Activated CD4-positive, alpha-beta memory T cell treated with anti-CD3 and anti-CD28 coated beads, Interleukin-2, amount 10 ng/mL, durations not matched to agents 7 days and 5 days (primary cell): ENCODE measurements at regions of chr11 and their contacts with region 1.

Region 1: DNA sequence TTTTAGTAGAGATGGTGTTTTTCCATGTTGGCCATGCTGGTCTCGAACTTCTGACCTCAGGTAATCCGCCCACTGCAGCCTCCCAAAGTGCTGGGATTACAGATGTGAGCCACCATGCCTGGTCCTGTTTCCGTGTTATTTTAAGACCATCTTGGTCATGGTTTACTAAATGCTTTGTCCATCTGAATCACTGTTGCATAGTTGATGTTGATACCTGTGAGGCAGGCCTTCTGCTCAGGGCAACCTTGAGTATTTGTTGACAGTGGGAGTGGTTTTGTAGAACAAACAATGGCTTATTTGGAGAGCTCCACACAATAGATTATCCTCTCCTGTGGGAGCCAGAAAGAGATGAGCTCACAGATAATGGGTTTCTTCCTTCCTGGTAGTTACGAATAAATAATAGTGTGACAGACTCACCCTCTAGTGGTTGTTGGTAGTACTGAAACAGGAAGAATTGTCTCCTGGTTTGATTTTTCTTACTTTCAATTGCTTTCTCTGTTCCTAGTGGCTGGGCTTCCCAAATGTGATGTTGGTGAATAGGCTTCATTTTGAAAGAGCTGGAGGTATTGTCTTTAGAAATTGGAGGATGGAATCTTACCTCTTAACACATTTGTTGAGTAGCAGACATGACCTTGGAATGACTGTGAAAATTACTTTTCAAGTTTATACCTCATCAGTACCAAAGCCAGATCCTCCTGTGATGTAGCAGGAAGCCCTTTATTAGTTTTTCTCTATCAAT is 39.0 kb downstream of the CTNND1 start:
- DNase-seq: no peak
- H3K4me3 Mint-ChIP-seq: no peak overlapping the region
- H3K27ac Mint-ChIP-seq: peak overlapping the region; percentile 49
- H3K4me1 Mint-ChIP-seq: peaks cover 30% of the 10 kb centered on the region
- H3K27me3 Mint-ChIP-seq: no peaks in the 10 kb centered on the region

Region 2: GRCh38 chr11:57604296-57605027 is 196.2 kb before region 1 on chr11:
- CTCF ChIA-PET with region 1: no interaction called
- POLR2A ChIA-PET with region 1: no interaction called
- DNase-seq: no peak
- H3K4me3 Mint-ChIP-seq: no peak overlapping the region
- H3K27ac Mint-ChIP-seq: no peak overlapping the region
- H3K4me1 Mint-ChIP-seq: peaks cover 3% of the 10 kb centered on the region
- H3K27me3 Mint-ChIP-seq: peaks cover 21% of the 10 kb centered on the region

Region 3: GRCh38 chr11:57644748-57645688 is 155.6 kb before region 1 on chr11:
- CTCF ChIA-PET with region 1: interaction called, 15 read pairs
- POLR2A ChIA-PET with region 1: no interaction called
- DNase-seq: peak; percentile 85
- H3K4me3 Mint-ChIP-seq: no peak overlapping the region
- H3K27ac Mint-ChIP-seq: no peak overlapping the region
- H3K4me1 Mint-ChIP-seq: peaks cover 31% of the 10 kb centered on the region
- H3K27me3 Mint-ChIP-seq: peaks cover 64% of the 10 kb centered on the region

Region 4: DNA sequence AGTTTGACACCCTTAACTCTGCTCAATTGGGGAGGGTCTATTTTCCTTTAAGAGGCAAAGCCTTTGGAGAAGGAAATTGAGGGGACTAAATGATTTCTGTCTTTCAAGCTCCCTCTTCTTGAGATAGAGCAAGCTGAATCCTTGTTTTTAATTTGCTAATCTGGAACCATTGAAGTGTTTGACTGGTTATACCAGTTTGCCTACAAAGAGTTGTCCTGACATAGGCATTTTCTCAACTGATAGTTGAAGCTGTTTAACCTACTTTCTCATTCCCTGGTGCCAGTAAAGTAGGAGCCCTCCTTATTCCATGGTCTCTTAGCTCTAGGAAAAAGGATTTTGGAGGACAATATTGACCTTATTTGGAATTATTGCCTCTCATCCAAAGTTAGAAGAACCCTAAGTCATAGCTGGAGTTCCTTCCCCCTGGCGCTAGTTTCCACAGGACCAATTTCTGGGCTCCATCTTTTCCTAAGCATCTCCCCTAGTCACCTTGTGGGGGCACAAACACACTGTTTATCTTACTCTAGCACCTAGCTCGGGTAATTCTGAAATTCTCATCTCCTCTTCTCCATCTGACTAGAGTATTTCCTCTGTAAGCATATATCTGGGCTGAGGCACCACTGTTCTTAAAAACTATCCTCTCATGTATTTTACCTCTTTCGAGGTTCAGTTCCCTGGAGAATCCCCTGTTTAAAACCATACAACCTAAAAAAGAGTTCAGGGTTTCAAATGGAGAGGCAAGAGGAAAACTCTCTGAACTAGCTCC is 125.3 kb before region 1 on chr11:
- CTCF ChIA-PET with region 1: interaction called, 13 read pairs
- POLR2A ChIA-PET with region 1: interaction called, 3 read pairs
- DNase-seq: no peak
- H3K4me3 Mint-ChIP-seq: no peak overlapping the region
- H3K27ac Mint-ChIP-seq: no peak overlapping the region
- H3K4me1 Mint-ChIP-seq: peaks cover 70% of the 10 kb centered on the region
- H3K27me3 Mint-ChIP-seq: no peaks in the 10 kb centered on the region

Region 5: DNA sequence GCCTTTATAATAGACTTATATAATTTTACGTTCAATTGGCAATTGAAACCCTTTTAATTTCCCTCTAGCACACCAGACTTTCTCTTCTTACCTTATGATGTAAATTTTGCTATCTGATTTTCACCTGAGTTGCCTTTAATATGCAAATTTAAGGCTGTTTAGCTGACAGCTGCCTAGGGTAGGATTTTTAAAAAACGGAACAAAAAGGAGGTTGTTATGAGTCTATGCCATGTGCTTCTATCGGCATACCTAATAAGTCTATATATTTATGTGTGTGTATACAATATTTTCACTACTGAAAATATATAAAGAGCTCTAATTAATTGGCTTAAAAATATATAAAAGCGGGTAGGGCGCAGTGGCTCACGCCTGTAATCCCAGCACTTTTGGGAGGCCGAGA is 71.1 kb before region 1 on chr11:
- CTCF ChIA-PET with region 1: interaction called, 14 read pairs
- POLR2A ChIA-PET with region 1: interaction called, 4 read pairs
- DNase-seq: no peak
- H3K4me3 Mint-ChIP-seq: no peak overlapping the region
- H3K27ac Mint-ChIP-seq: no peak overlapping the region
- H3K4me1 Mint-ChIP-seq: peaks cover 10% of the 10 kb centered on the region
- H3K27me3 Mint-ChIP-seq: no peaks in the 10 kb centered on the region

Region 6: DNA sequence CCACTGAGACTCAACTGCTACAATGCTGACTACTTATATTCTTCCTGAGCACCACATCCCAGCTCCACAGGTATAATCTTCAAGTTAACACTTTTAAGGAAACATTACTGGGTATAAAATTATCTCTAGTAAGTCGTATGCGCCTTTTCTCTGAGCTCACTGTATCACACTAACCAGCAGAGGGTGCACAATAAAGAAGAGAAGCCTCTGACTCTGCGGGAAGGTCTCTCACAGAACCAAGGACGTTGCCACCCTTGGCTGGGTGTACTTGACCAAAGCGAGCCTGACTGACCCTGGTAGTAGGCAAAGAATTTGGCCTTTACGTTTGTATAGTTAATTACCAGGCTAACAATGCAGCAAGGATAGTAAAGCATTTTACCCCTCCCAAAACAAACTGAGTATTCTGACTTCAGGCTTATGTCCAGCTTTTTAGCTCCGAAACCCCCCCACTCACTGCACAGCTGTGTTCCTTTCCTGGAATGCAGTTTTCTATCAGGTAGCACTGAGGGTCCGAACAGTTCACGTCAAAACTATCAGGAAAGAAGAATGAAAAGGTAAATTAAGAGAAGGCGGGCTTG is 48.8 kb before region 1 on chr11 and contains the start of gene BTBD18:
- CTCF ChIA-PET with region 1: interaction called, 60 read pairs
- POLR2A ChIA-PET with region 1: interaction called, 4 read pairs
- DNase-seq: no peak
- H3K4me3 Mint-ChIP-seq: no peak within 1 kb of the TSS
- H3K27ac Mint-ChIP-seq: no peak within 1 kb of the TSS
- H3K4me1 Mint-ChIP-seq: peaks cover 4% of the 10 kb centered on the region
- H3K27me3 Mint-ChIP-seq: no peaks in the 10 kb centered on the region
- total RNA-seq, gene BTBD18: not detected

Region 7: GRCh38 chr11:57779275-57779674 is 21.3 kb before region 1 on chr11:
- CTCF ChIA-PET with region 1: interaction called, 18 read pairs
- POLR2A ChIA-PET with region 1: interaction called, 3 read pairs
- DNase-seq: no peak
- H3K4me3 Mint-ChIP-seq: no peak overlapping the region
- H3K27ac Mint-ChIP-seq: no peak overlapping the region
- H3K4me1 Mint-ChIP-seq: peaks cover 8% of the 10 kb centered on the region
- H3K27me3 Mint-ChIP-seq: peaks cover 4% of the 10 kb centered on the region